Activated naive CD4-positive, alpha-beta T cell treated with anti-CD3 and anti-CD28 coated beads for 36 hours (primary cell): ENCODE measurements at regions of chr15 and their contacts with region 1.

Region 1: DNA sequence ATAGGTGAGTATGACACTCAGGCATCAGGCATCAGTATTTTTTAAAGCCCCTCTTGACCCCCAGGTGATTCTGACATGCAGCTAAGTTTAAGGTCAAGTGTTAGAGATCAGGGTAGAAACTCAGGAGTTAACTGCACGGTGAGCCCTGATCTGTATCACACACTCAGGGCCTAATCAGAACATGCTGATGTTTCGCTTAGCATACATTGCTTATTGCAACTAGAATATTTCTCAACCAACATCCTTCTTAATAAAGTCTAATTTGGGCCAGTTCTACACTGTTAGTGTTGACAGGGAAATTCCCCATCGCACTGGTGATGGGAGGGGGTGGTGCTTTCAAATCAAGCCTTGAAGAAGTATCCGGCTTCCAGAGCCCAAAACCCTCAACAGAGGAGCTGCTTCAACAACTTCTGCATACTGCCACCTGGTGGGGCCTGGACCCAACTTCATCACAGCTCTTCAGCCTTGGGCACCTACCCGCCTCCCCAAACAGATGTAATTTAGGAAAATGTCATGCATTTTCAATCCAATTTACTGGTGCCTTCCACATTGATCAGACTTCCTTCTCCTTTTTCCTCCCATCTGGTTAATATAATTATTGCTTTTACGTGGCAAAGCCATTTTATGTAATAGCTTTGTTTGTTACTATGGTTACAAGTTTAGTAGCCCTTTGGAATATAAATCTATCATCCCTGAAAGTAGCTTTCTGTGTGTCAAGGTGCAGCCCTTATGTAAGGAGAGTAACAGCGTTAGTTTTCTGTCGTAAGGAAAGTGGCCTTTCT is 312.2 kb downstream of the RORA start:
- DNase-seq: peak; percentile 96
- H3K4me3 Mint-ChIP-seq: no peak overlapping the region
- H3K27ac Mint-ChIP-seq: peak overlapping the region; percentile 62
- H3K4me1 Mint-ChIP-seq: peaks cover 25% of the 10 kb centered on the region
- H3K27me3 Mint-ChIP-seq: peaks cover 2% of the 10 kb centered on the region

Region 2: GRCh38 chr15:60362321-60363086 is 554.4 kb before region 1 on chr15:
- CTCF ChIA-PET with region 1: interaction called, 3 read pairs
- intact Hi-C with region 1: loop called (anchors 1 kb)
- DNase-seq: peak; percentile 61
- H3K4me3 Mint-ChIP-seq: no peak overlapping the region
- H3K27ac Mint-ChIP-seq: no peak overlapping the region
- H3K4me1 Mint-ChIP-seq: peaks cover 12% of the 10 kb centered on the region
- H3K27me3 Mint-ChIP-seq: no peaks in the 10 kb centered on the region

Region 3: DNA sequence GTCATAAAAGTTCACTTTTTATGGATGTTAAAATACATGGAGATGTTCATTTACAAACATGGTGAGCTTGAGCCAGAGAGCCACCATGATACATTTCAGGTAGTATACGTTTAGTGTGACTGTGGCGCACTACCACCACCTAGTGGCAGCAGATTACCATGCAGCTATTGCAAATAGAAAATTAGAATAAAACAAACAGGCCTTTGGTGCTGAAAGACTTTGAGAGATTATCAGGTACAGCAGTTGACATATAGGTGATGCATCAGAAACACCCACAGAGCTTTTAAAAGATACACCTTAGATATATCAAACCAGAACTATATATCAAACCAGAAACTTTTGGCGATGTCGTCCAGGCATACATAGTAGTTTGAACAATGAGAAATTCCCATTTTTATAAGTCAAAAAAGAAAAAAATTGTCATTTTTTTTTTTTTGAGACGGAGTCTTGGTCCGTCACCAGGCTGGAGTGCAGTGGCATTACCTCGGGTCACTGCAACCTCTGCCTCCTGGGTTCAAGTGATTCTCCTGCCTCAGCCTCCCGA is 396.0 kb before region 1 on chr15:
- CTCF ChIA-PET with region 1: interaction called, 24 read pairs
- intact Hi-C with region 1: no loop called
- DNase-seq: peak; percentile 91
- H3K4me3 Mint-ChIP-seq: no peak overlapping the region
- H3K27ac Mint-ChIP-seq: peak overlapping the region; percentile 42
- H3K4me1 Mint-ChIP-seq: peaks cover 42% of the 10 kb centered on the region
- H3K27me3 Mint-ChIP-seq: no peaks in the 10 kb centered on the region

Region 4: GRCh38 chr15:60649845-60650548 is 266.9 kb before region 1 on chr15:
- CTCF ChIA-PET with region 1: interaction called, 8 read pairs
- intact Hi-C with region 1: loop called (anchors 1 kb)
- DNase-seq: peak; percentile 74
- H3K4me3 Mint-ChIP-seq: peak overlapping the region; percentile 52
- H3K27ac Mint-ChIP-seq: peak overlapping the region; percentile 88
- H3K4me1 Mint-ChIP-seq: peaks cover 49% of the 10 kb centered on the region
- H3K27me3 Mint-ChIP-seq: no peaks in the 10 kb centered on the region

Region 5: GRCh38 chr15:60798821-60799220 is 118.0 kb before region 1 on chr15:
- CTCF ChIA-PET with region 1: interaction called, 8 read pairs
- intact Hi-C with region 1: loop called (anchors 2 kb)
- DNase-seq: peak; percentile 87
- H3K4me3 Mint-ChIP-seq: peak overlapping the region; percentile 34
- H3K27ac Mint-ChIP-seq: peak overlapping the region; percentile 98
- H3K4me1 Mint-ChIP-seq: peaks cover 83% of the 10 kb centered on the region
- H3K27me3 Mint-ChIP-seq: no peaks in the 10 kb centered on the region

Region 6: DNA sequence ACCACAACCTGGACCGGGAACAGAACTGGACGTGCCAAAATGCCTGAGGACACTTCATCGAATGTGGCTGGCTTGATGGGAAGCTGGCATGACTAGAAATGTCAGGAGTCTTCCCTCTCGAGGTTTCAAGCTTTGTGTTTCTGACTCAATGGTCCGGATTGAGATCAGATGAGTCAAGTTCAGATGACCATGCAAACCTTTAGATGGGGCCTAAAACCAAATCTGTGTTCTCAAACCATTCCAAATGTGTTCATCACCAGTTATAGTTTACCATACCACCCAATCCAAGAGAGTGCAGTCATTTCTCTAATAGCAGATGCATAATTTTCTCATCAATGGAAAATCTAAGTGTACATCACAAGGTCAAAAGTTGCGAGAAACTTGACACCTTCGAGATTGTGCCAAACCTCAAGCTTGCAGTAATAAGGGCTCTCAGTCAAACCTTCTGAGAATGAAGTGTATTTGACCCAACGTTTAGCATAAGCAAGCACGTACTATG is 56.8 kb before region 1 on chr15:
- CTCF ChIA-PET with region 1: interaction called, 6 read pairs
- intact Hi-C with region 1: loop called (anchors 1 kb)
- DNase-seq: no peak
- H3K4me3 Mint-ChIP-seq: no peak overlapping the region
- H3K27ac Mint-ChIP-seq: peak overlapping the region; percentile 69
- H3K4me1 Mint-ChIP-seq: peaks cover 68% of the 10 kb centered on the region
- H3K27me3 Mint-ChIP-seq: no peaks in the 10 kb centered on the region

Region 7: DNA sequence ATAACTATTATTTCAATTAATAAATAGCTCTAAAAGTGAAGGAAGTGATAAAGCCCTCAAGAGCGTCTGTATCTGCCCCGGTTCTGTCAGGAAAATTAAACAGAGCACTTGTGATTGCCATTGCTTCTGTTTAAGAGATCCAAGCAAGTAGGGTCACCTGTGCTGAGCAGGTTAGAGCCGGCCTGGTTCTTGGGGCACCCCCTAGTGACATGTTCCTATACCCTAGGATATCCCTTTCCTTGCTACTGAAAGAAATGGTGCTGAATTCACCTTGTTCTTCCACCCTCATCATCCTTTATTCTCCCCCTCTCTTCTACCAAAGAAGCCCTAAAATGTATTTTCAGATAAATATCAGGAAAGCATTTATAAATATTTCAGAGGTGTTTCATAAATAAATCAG is 11.3 kb before region 1 on chr15:
- CTCF ChIA-PET with region 1: interaction called, 29 read pairs
- intact Hi-C with region 1: no loop called
- DNase-seq: peak; percentile 66
- H3K4me3 Mint-ChIP-seq: no peak overlapping the region
- H3K27ac Mint-ChIP-seq: no peak overlapping the region
- H3K4me1 Mint-ChIP-seq: peaks cover 38% of the 10 kb centered on the region
- H3K27me3 Mint-ChIP-seq: peaks cover 4% of the 10 kb centered on the region